Activated CD4-positive, alpha-beta memory T cell treated with anti-CD3 and anti-CD28 coated beads for 36 hours (primary cell): ENCODE measurements at regions of chr17 and their contacts with region 1.

Region 1: GRCh38 chr17:58417300-58418092 is at the start of gene RNF43:
- DNase-seq: peak; percentile 93
- H3K4me3 Mint-ChIP-seq: peak within 1 kb of the TSS; percentile 24
- H3K27ac Mint-ChIP-seq: peak within 1 kb of the TSS; percentile 24
- H3K4me1 Mint-ChIP-seq: peaks cover 24% of the 10 kb centered on the region
- H3K27me3 Mint-ChIP-seq: no peaks in the 10 kb centered on the region
- total RNA-seq, gene RNF43: 0.39 to 0.93 TPM

Region 2: GRCh38 chr17:58303971-58304725 is 113.3 kb before region 1 on chr17:
- CTCF ChIA-PET with region 1: interaction called, 23 read pairs
- POLR2A ChIA-PET with region 1: no interaction called
- intact Hi-C with region 1: loop called (anchors 5 kb)
- DNase-seq: peak; percentile 72
- H3K4me3 Mint-ChIP-seq: no peak overlapping the region
- H3K27ac Mint-ChIP-seq: no peak overlapping the region
- H3K4me1 Mint-ChIP-seq: peaks cover 5% of the 10 kb centered on the region
- H3K27me3 Mint-ChIP-seq: no peaks in the 10 kb centered on the region

Region 3: GRCh38 chr17:58337600-58338453 is 79.7 kb before region 1 on chr17:
- CTCF ChIA-PET with region 1: interaction called, 17 read pairs
- POLR2A ChIA-PET with region 1: interaction called, 13 read pairs
- intact Hi-C with region 1: no loop called
- DNase-seq: peak; percentile 98
- H3K4me3 Mint-ChIP-seq: peak overlapping the region; percentile 92
- H3K27ac Mint-ChIP-seq: peak overlapping the region; percentile 98
- H3K4me1 Mint-ChIP-seq: peaks cover 22% of the 10 kb centered on the region
- H3K27me3 Mint-ChIP-seq: no peaks in the 10 kb centered on the region

Region 4: DNA sequence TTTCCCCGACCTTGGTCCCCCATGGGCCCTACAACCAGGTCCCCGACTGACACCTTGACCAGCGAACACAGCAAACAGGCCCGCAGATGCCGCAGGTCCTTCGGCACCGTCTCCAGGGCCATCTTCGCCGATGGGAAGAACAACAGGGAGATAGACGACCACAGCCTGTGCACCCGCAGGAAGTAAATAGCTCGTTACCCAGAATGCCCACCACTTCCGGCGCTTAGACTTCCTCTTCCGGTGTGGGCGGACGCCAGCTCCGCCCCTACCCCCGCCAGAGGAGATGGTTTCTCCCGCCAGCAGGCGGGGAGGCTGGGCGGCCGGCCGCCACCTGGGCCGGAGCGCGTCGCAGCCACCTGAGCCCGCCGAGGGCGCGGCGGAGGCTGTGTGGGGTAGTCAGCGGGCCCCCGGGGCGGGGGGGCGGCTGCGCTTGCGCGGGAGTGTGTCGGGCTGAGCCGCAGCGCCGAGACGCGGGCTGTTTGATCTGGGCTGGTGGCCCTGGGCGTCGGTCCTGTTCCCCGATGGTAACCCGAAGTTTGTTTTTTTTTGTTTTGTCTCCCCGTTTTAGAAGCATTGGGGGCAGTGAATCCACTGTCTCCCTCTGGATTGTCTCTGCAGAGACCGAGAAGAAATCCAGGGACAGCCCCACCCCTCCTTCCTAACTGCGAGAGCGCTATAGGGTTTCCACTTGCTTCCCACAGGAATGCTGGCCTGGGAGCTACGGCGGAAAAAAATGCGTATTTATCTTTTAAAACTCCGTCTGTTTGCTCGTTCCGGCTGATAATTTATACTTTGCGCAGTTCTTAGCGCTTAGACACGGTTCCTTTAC is 65.3 kb before region 1 on chr17 and contains the start of gene SUPT4H1:
- CTCF ChIA-PET with region 1: interaction called, 35 read pairs
- POLR2A ChIA-PET with region 1: interaction called, 22 read pairs
- intact Hi-C with region 1: loop called (anchors 1 kb)
- DNase-seq: peak; percentile 96
- H3K4me3 Mint-ChIP-seq: peak within 1 kb of the TSS; percentile 100
- H3K27ac Mint-ChIP-seq: peak within 1 kb of the TSS; percentile 99
- H3K4me1 Mint-ChIP-seq: peaks cover 50% of the 10 kb centered on the region
- H3K27me3 Mint-ChIP-seq: no peaks in the 10 kb centered on the region
- total RNA-seq, gene SUPT4H1: 113 to 114 TPM

Region 5: GRCh38 chr17:58427807-58428206 is 10.3 kb after region 1 on chr17:
- CTCF ChIA-PET with region 1: interaction called, 24 read pairs
- POLR2A ChIA-PET with region 1: no interaction called
- intact Hi-C with region 1: no loop called
- DNase-seq: no peak
- H3K4me3 Mint-ChIP-seq: no peak overlapping the region
- H3K27ac Mint-ChIP-seq: no peak overlapping the region
- H3K4me1 Mint-ChIP-seq: no peaks in the 10 kb centered on the region
- H3K27me3 Mint-ChIP-seq: no peaks in the 10 kb centered on the region

Region 6: GRCh38 chr17:58520843-58521430 is 103.4 kb after region 1 on chr17:
- CTCF ChIA-PET with region 1: no interaction called
- POLR2A ChIA-PET with region 1: no interaction called
- intact Hi-C with region 1: no loop called
- DNase-seq: peak; percentile 21
- H3K4me3 Mint-ChIP-seq: no peak overlapping the region
- H3K27ac Mint-ChIP-seq: no peak overlapping the region
- H3K4me1 Mint-ChIP-seq: peaks cover 16% of the 10 kb centered on the region
- H3K27me3 Mint-ChIP-seq: no peaks in the 10 kb centered on the region

Region 7: GRCh38 chr17:58666858-58667619 is 249.5 kb after region 1 on chr17:
- CTCF ChIA-PET with region 1: no interaction called
- POLR2A ChIA-PET with region 1: no interaction called
- intact Hi-C with region 1: no loop called
- DNase-seq: peak; percentile 59
- H3K4me3 Mint-ChIP-seq: no peak overlapping the region
- H3K27ac Mint-ChIP-seq: no peak overlapping the region
- H3K4me1 Mint-ChIP-seq: peaks cover 9% of the 10 kb centered on the region
- H3K27me3 Mint-ChIP-seq: peaks cover 8% of the 10 kb centered on the region